ENCODE measurements at regions of chr6 and their contacts with region 1.

Region 1: GRCh38 chr6:140921366-140922226 is 1211.1 kb upstream of the GJE1 start:
- DNase-seq: peak; percentile 89
- H3K4me3 ChIP-seq: no peak overlapping the region
- H3K27ac ChIP-seq: no peak overlapping the region
- H3K4me1 ChIP-seq: no peaks in the 10 kb centered on the region
- H3K27me3 ChIP-seq: no peaks in the 10 kb centered on the region
- CTCF ChIP-seq: peak; percentile 85 to 86

Region 2: GRCh38 chr6:139369568-139370282 is 1551.9 kb before region 1 on chr6:
- CTCF ChIA-PET with region 1: no interaction called
- dilution Hi-C with region 1: no loop called
- in situ Hi-C with region 1: loop called (anchors 10 kb)
- intact Hi-C with region 1: loop called (anchors 1 kb)
- DNase-seq: peak; percentile 25
- H3K4me3 ChIP-seq: no peak overlapping the region
- H3K27ac ChIP-seq: no peak overlapping the region
- H3K4me1 ChIP-seq: peaks cover 13% of the 10 kb centered on the region
- H3K27me3 ChIP-seq: no peaks in the 10 kb centered on the region
- CTCF ChIP-seq: peak; percentile 60 to 63

Region 3: DNA sequence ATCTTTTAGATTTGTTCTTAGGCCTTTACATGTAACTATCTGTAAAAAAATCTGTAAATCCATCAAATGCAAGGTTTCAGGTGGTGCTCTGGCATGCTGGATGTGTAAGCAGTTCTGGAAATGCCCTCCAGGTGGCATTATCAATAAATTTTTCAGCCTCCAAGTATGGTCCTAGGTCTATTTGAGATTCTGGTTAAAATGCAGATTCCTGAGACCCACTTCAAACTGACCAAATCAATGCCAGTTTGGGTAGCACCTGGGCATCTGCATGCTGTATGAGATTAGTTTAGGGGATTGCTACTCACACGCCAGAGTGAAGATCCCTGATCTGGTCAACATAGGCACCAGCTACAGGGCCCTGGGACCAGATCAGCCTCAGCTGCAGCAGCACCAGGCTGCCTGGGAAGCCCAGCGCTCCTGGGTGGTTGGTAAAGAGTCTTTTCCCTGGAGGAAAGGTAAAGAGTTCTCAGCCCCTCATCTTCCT is 1039.8 kb before region 1 on chr6:
- CTCF ChIA-PET with region 1: no interaction called
- dilution Hi-C with region 1: no loop called
- in situ Hi-C with region 1: no loop called
- intact Hi-C with region 1: loop called (anchors 1 kb)
- DNase-seq: peak; percentile 30
- H3K4me3 ChIP-seq: no peak overlapping the region
- H3K27ac ChIP-seq: no peak overlapping the region
- H3K4me1 ChIP-seq: peaks cover 9% of the 10 kb centered on the region
- H3K27me3 ChIP-seq: no peaks in the 10 kb centered on the region
- CTCF ChIP-seq: peak; percentile 70 to 73

Region 4: GRCh38 chr6:140441256-140441655 is 480.3 kb before region 1 on chr6:
- CTCF ChIA-PET with region 1: no interaction called
- dilution Hi-C with region 1: no loop called
- in situ Hi-C with region 1: no loop called
- intact Hi-C with region 1: loop called (anchors 1 kb)
- DNase-seq: peak; percentile 28
- H3K4me3 ChIP-seq: no peak overlapping the region
- H3K27ac ChIP-seq: no peak overlapping the region
- H3K4me1 ChIP-seq: peaks cover 18% of the 10 kb centered on the region
- H3K27me3 ChIP-seq: no peaks in the 10 kb centered on the region
- CTCF ChIP-seq: peak; percentile 43 to 78

Region 5: GRCh38 chr6:140462453-140463311 is 458.9 kb before region 1 on chr6:
- CTCF ChIA-PET with region 1: no interaction called
- dilution Hi-C with region 1: no loop called
- in situ Hi-C with region 1: no loop called
- intact Hi-C with region 1: loop called (anchors 5 kb)
- DNase-seq: peak; percentile 95
- H3K4me3 ChIP-seq: peak overlapping the region in 2 of 3 experiments; percentile 7 to 19
- H3K27ac ChIP-seq: peak overlapping the region; percentile 49
- H3K4me1 ChIP-seq: peaks cover 17% of the 10 kb centered on the region
- H3K27me3 ChIP-seq: no peaks in the 10 kb centered on the region
- CTCF ChIP-seq: no peak

Region 6: GRCh38 chr6:140846503-140847261 is 74.9 kb before region 1 on chr6:
- CTCF ChIA-PET with region 1: no interaction called
- dilution Hi-C with region 1: no loop called
- in situ Hi-C with region 1: no loop called
- intact Hi-C with region 1: no loop called
- DNase-seq: peak; percentile 37
- H3K4me3 ChIP-seq: no peak overlapping the region
- H3K27ac ChIP-seq: no peak overlapping the region
- H3K4me1 ChIP-seq: no peaks in the 10 kb centered on the region
- H3K27me3 ChIP-seq: no peaks in the 10 kb centered on the region
- CTCF ChIP-seq: no peak